CD4-positive, alpha-beta memory T cell (primary cell): ENCODE measurements at regions of chrX and their contacts with region 1.

Region 1: DNA sequence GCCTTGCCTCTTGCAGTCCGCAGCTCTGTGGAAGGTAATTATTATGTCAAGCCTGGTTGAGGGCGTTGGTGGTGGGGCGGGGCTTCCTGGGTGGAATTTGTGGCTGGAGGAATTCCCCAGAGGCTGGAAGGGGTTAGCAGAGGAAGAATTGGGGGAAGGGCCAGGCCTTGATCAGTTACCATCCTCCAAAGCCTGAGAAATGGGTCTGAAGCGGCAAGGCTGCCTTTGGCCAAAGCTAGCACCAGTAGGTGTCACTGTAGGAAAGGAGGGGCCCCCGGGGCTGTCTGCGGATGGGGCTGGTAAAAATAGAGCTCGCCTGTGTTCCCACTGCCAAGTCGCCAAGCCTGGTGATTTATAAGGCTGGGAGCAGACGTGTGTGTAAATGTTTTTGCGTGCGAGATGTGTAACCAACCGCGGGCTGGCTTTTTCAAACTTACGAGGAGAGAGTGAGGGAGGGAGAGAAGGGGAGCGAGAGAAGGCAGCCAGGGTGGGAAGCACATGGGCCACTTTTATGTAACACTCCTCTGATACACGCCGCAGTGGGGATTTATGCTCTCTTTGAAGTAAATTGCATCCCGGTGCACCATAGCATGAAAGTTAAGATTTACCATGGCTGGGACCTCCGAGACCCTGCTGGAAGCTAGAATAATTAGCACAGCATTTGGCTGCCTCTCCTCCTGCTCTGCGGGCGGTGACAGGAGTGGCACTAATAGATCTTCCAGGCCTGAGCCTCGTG is 366.9 kb downstream of the BCOR start:
- DNase-seq: peak; percentile 35 to 61 (median 44)
- H3K4me3 ChIP-seq: no peak overlapping the region
- H3K4me3 Mint-ChIP-seq: peak overlapping the region in 2 of 8 donors; percentile 46 to 65
- H3K27ac ChIP-seq: no peak overlapping the region
- H3K27ac Mint-ChIP-seq: peak overlapping the region in 3 of 7 donors; percentile 59 to 79 (median 70)
- H3K4me1 ChIP-seq: peaks cover 8% of the 10 kb centered on the region
- H3K4me1 Mint-ChIP-seq: peaks cover 4 to 7% (median 5%) of the 10 kb centered on the region in 4 donors
- H3K27me3 ChIP-seq: no peaks in the 10 kb centered on the region
- H3K27me3 Mint-ChIP-seq: no peaks in the 10 kb centered on the region

Region 2: GRCh38 chrX:39749720-39750119 is 18.9 kb after region 1 on chrX:
- CTCF ChIA-PET with region 1: interaction called, 11 read pairs
- POLR2A ChIA-PET with region 1: no interaction called
- intact Hi-C with region 1: no loop called
- DNase-seq: no peak
- H3K4me3 ChIP-seq: no peak overlapping the region
- H3K4me3 Mint-ChIP-seq: no peak overlapping the region
- H3K27ac ChIP-seq: no peak overlapping the region
- H3K27ac Mint-ChIP-seq: no peak overlapping the region
- H3K4me1 ChIP-seq: no peaks in the 10 kb centered on the region
- H3K4me1 Mint-ChIP-seq: peaks cover 0 to 2% (median 0%) of the 10 kb centered on the region in 4 donors
- H3K27me3 ChIP-seq: no peaks in the 10 kb centered on the region
- H3K27me3 Mint-ChIP-seq: no peaks in the 10 kb centered on the region

Region 3: GRCh38 chrX:39814391-39814790 is 83.6 kb after region 1 on chrX:
- CTCF ChIA-PET with region 1: interaction called, 17 read pairs
- POLR2A ChIA-PET with region 1: no interaction called
- intact Hi-C with region 1: loop called (anchors 1 kb)
- DNase-seq: peak; percentile 40 to 47 (median 46)
- H3K4me3 ChIP-seq: no peak overlapping the region
- H3K4me3 Mint-ChIP-seq: peak overlapping the region in 1 of 8 donors; percentile 47
- H3K27ac ChIP-seq: no peak overlapping the region
- H3K27ac Mint-ChIP-seq: peak overlapping the region in 1 of 7 donors; percentile 37
- H3K4me1 ChIP-seq: peaks cover 13% of the 10 kb centered on the region
- H3K4me1 Mint-ChIP-seq: peaks cover 5 to 27% (median 10%) of the 10 kb centered on the region in 4 donors
- H3K27me3 ChIP-seq: no peaks in the 10 kb centered on the region
- H3K27me3 Mint-ChIP-seq: no peaks in the 10 kb centered on the region

Region 4: GRCh38 chrX:40068044-40068443 is 337.2 kb after region 1 on chrX:
- CTCF ChIA-PET with region 1: interaction called, 3 read pairs
- POLR2A ChIA-PET with region 1: no interaction called
- intact Hi-C with region 1: loop called (anchors 5 kb)
- DNase-seq: peak in 4 of 5 donors; percentile 25 to 46 (median 38)
- H3K4me3 ChIP-seq: no peak overlapping the region
- H3K4me3 Mint-ChIP-seq: no peak overlapping the region
- H3K27ac ChIP-seq: no peak overlapping the region
- H3K27ac Mint-ChIP-seq: peak overlapping the region; percentile 2 to 86 (median 64)
- H3K4me1 ChIP-seq: peaks cover 49% of the 10 kb centered on the region
- H3K4me1 Mint-ChIP-seq: peaks cover 27 to 54% (median 43%) of the 10 kb centered on the region in 4 donors
- H3K27me3 ChIP-seq: no peaks in the 10 kb centered on the region
- H3K27me3 Mint-ChIP-seq: no peaks in the 10 kb centered on the region

Region 5: DNA sequence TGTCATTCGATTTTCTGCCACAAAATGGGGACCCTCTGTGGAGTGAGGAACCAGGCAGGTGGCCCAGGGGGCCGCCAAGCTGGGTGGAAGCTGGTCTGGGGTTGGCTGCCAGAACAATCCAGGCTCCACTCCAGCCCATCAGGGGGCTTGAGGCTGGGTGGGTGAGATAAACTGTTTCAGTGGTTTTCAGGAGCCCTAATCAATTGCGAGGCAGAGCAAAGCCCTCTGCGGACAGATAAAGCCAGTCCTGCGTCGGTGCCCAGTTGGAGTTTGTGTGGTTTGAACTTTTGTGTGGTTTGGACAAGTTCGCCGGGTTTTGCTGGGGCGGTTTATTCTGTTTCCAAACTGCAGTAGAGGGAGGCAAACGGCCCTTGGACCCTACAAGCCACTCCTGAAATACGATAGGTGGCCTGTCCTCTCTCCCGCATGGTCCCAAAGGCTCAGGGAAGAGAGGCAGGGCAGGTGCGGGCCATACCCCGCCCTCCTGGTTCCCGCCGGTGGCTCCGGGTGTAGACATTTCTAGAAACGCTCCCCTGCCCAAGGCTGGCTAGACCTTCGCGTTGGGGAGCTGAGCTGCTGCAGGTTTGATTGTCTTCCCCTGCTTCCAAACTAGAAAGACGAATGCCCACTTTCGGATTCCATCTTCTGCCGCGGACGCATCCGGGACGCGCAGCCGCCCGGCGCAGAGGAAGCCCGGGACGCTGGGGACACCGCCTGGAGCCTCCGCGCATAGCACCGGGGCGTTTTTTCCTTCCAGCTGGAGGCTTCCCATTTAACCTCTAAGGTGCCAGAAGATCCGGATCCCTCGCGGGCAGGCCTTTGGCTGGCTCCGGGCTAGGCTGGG is 535.9 kb after region 1 on chrX:
- CTCF ChIA-PET with region 1: interaction called, 7 read pairs
- POLR2A ChIA-PET with region 1: no interaction called
- intact Hi-C with region 1: loop called (anchors 1 kb)
- DNase-seq: peak; percentile 35 to 47 (median 40)
- H3K4me3 ChIP-seq: peak overlapping the region; percentile 36 to 57
- H3K4me3 Mint-ChIP-seq: peak overlapping the region; percentile 74 to 87 (median 82)
- H3K27ac ChIP-seq: no peak overlapping the region
- H3K27ac Mint-ChIP-seq: peak overlapping the region in 3 of 7 donors; percentile 27 to 82 (median 63)
- H3K4me1 ChIP-seq: peaks cover 10% of the 10 kb centered on the region
- H3K4me1 Mint-ChIP-seq: peaks cover 0 to 16% (median 3%) of the 10 kb centered on the region in 4 donors
- H3K27me3 ChIP-seq: no peaks in the 10 kb centered on the region
- H3K27me3 Mint-ChIP-seq: no peaks in the 10 kb centered on the region